Activated CD4-positive, alpha-beta T cell treated with anti-CD3 and anti-CD28 coated beads for 36 hours (primary cell): ENCODE measurements at regions of chr1 and their contacts with region 1.

Region 1: GRCh38 chr1:23979878-23980724 is at the start of gene SRSF10:
- DNase-seq: peak; percentile 99
- ATAC-seq: peak; percentile 94
- H3K4me3 Mint-ChIP-seq: peak within 1 kb of the TSS; percentile 97
- H3K27ac Mint-ChIP-seq: peak within 1 kb of the TSS; percentile 100
- H3K4me1 Mint-ChIP-seq: peaks cover 38% of the 10 kb centered on the region
- H3K27me3 Mint-ChIP-seq: no peaks in the 10 kb centered on the region
- total RNA-seq, gene SRSF10: 213 to 225 TPM

Region 2: DNA sequence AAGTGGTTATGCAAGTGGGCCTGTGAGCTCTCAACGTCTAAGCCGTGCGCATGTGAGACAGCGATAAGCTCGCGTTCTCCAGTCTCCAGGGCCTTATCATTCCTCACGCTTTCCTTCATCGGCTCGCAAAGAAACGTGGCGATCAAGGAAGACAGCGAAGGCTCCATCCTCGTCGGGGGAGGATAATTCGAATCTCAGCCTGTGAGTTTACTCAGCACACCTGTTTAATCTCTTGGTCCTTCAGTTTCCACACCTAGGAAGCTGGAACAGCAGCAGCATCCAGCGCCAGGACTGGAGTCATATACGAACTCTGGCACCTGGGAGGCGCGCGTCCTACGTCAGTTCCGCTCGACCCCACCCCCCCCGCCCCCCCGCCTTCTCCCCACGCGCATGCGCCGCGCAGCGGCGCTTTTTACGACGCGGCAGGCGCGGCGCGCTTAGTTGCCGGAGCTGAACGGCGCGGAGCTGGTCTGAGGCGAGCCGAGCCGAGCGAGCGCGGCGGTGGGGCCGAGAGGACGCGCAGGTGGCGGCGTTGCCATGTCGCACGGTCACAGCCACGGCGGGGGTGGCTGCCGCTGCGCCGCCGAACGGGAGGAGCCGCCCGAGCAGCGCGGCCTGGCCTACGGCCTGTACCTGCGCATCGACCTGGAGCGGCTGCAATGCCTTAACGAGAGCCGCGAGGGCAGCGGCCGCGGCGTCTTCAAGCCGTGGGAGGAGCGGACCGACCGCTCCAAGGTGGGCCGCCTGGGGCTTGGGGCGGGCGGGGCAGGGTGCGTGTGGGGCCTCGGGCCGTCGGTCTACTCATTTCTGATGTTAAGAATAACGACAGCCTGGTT is 201.9 kb before region 1 on chr1 and contains the start of gene PITHD1:
- CTCF ChIA-PET with region 1: no interaction called
- POLR2A ChIA-PET with region 1: no interaction called
- intact Hi-C with region 1: loop called in 1 of 2 experiments (anchors 1 kb)
- DNase-seq: peak; percentile 90
- ATAC-seq: peak; percentile 87
- H3K4me3 Mint-ChIP-seq: peak within 1 kb of the TSS; percentile 87
- H3K27ac Mint-ChIP-seq: peak within 1 kb of the TSS; percentile 87
- H3K4me1 Mint-ChIP-seq: peaks cover 43% of the 10 kb centered on the region
- H3K27me3 Mint-ChIP-seq: no peaks in the 10 kb centered on the region
- total RNA-seq, gene PITHD1: 53.1 to 64.1 TPM

Region 3: DNA sequence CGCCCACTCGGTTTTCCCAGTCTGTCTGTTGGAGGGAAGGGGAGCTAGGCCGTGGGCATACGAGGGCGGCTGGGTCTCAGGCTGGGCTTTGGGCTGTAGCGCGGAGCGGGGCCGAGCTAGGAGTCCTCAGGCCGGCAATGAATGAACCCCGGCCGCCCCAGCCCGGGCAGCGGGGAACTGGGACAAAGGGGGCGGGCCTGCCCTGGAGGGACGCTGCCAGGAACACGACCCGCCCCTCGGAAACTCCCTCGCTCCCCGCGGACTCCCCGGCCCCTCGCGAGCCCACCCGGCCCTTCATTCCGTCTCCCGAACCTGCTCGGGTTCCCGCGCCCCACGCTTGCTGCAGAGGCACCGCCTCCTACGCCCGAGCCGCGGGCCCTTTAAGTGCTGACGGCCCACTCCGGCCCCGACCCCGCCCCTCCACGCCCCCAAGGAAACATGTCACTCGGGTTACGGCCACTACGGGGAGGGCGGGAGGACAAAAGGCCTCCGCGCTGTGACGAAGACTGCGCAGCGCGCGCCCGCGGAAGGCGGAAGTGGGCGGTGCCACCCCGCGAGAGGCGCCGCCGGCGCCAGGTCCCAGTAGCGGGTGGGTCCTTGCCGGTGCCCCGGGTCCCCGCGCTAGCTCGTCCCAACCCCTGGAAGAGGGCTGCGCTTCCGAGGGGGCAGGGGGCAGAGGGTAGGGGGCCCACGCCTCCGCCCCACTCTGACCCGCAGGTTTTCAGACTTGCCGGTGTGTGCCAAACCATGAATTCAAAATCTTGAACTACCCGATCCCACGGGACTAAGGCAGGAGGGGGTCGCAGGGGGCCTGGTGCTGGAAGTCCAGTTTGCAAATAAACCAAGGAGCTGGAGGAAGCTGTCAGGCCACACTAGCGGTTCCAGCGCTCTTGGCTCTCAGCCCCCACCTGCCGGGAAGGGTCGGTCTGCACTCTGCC is 179.4 kb before region 1 on chr1 and contains the start of gene GALE:
- CTCF ChIA-PET with region 1: no interaction called
- POLR2A ChIA-PET with region 1: no interaction called
- intact Hi-C with region 1: loop called in 1 of 2 experiments (anchors 1 kb)
- DNase-seq: peak; percentile 99
- ATAC-seq: peak; percentile 84
- H3K4me3 Mint-ChIP-seq: peak within 1 kb of the TSS; percentile 86
- H3K27ac Mint-ChIP-seq: peak within 1 kb of the TSS; percentile 84
- H3K4me1 Mint-ChIP-seq: peaks cover 13% of the 10 kb centered on the region
- H3K27me3 Mint-ChIP-seq: no peaks in the 10 kb centered on the region
- total RNA-seq, gene GALE: 27.4 to 35.6 TPM

Region 4: DNA sequence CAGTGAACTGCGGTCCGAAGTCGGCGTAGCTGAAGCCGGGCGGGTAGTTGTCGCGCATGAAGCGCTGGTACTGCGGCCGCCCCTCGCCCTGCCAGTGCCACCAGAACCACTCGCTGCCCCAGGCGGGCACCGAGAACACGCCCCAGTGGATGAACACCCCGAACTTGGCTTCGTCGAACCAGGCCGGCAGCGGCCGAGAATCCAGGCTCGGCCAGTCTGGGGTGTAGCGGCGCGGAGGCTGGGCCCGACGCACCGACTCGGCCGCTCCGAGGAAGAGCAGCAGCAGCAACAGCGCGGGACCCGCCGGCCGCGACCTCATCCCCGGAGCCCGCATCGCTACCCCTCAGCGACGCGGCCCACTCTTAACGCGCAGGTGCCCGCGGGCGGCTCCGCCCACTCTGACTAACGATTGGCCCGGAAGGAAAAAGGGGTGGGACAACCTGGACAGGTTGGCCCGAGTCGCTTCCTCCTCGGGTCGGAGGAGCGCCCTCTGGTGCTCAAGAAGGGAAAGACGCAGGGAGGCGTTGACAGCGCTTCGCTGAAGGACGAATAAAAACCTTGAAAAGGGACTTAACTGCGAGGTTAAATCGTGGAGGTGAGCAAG is 112.0 kb before region 1 on chr1 and contains the start of gene FUCA1:
- CTCF ChIA-PET with region 1: no interaction called
- POLR2A ChIA-PET with region 1: no interaction called
- intact Hi-C with region 1: loop called in 1 of 2 experiments (anchors 1 kb)
- DNase-seq: peak; percentile 95
- ATAC-seq: peak; percentile 97
- H3K4me3 Mint-ChIP-seq: peak within 1 kb of the TSS; percentile 76
- H3K27ac Mint-ChIP-seq: peak within 1 kb of the TSS; percentile 77
- H3K4me1 Mint-ChIP-seq: peaks cover 19% of the 10 kb centered on the region
- H3K27me3 Mint-ChIP-seq: no peaks in the 10 kb centered on the region
- total RNA-seq, gene FUCA1: 4.2 to 4.5 TPM

Region 5: DNA sequence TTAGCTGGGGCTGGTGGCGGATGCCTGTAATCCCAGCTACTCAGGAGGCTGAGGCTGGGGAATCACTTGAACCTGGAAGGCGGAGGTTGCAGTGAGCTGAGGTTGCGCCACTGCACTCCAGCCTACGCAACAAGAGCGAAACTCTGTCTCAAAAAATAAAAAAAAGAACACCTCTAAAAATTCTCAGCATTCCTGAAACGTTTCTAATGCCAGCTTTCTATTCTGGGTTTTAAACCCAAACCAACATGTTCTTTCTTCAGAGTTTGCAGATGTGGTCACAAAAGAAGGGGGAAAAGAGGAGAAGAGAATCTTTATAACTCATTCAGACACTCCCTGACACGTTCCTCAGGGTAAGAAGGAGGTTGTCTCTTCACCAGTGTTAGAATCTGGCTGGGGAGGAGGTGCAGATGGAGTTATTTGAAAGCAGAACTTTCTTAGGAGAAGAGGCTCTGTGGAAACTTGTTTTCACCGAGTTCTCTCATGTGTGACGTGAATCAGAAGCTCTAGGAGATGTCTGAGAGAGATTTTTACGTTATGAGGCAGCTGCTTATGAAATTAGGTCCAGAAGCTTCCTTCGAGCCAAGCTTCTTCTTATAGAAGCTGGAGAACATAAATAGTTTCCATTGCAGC is 49.1 kb before region 1 on chr1:
- CTCF ChIA-PET with region 1: no interaction called
- POLR2A ChIA-PET with region 1: no interaction called
- intact Hi-C with region 1: no loop called
- DNase-seq: no peak
- ATAC-seq: no peak
- H3K4me3 Mint-ChIP-seq: no peak overlapping the region
- H3K27ac Mint-ChIP-seq: no peak overlapping the region
- H3K4me1 Mint-ChIP-seq: no peaks in the 10 kb centered on the region
- H3K27me3 Mint-ChIP-seq: peaks cover 3% of the 10 kb centered on the region

Region 6: DNA sequence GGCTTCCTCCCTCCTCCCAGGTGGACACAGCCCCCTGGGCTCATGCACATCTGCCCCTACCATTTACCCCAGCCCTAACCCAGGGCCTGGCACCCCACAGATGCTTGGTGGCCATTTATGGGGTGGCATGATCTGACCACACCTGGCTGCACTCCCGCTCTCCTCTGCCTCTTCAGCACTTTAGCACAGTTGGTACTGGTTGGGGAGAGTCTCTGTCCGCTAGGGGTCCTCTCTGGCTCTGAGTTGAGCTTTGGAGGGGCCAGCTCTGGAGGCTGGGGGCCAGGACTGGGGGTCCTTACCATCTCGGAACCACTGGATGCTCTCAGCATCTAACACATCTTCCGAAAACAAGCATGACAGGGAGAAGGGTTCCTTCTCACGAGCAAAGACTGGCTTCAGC is 114.5 kb after region 1 on chr1:
- CTCF ChIA-PET with region 1: no interaction called
- POLR2A ChIA-PET with region 1: no interaction called
- intact Hi-C with region 1: no loop called
- DNase-seq: no peak
- ATAC-seq: no peak
- H3K4me3 Mint-ChIP-seq: no peak overlapping the region
- H3K27ac Mint-ChIP-seq: no peak overlapping the region
- H3K4me1 Mint-ChIP-seq: no peaks in the 10 kb centered on the region
- H3K27me3 Mint-ChIP-seq: peaks cover 5% of the 10 kb centered on the region

Region 7: GRCh38 chr1:25247024-25247828 is 1267.1 kb after region 1 on chr1 and contains the start of gene RSRP1:
- CTCF ChIA-PET with region 1: no interaction called
- POLR2A ChIA-PET with region 1: no interaction called
- intact Hi-C with region 1: loop called in 1 of 2 experiments (anchors 2 kb)
- DNase-seq: peak; percentile 100
- ATAC-seq: peak; percentile 90
- H3K4me3 Mint-ChIP-seq: peak within 1 kb of the TSS; percentile 96
- H3K27ac Mint-ChIP-seq: peak within 1 kb of the TSS; percentile 99
- H3K4me1 Mint-ChIP-seq: peaks cover 40% of the 10 kb centered on the region
- H3K27me3 Mint-ChIP-seq: no peaks in the 10 kb centered on the region
- total RNA-seq, gene RSRP1: 86.8 to 120 TPM